CD4-positive, alpha-beta T cell (primary cell): ENCODE measurements at regions of chr1 and their contacts with region 1.

Region 1: DNA sequence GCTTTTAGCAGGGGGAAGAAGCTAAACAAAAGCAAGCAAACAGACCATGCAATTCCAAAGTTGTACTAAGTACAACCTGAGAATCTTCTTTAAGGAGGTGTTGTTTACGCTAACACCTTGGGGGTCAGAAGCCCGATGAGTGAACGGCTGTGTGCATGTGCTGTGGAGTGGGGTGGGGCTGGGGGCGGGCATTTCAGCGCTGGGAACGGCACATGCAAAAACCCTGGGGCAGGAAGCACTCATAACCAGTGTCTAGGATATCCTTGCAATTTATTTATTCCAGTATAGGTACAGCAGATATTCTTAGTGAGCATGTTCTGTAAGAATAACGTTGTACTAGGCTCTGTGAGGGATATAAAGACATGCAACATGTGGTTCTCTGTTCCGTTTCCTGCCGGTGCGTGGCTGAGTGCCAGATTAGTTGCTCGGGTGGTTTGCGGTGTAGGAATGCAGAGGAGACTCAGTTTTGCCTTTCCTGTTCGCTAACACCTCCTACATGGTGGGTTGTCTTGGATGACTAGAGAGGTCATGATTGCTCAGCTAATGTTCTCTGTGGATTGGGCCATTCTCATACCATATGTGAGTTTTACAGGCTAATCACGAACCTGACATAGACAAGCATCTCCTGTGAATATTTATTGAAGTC is 3.7 kb downstream of the FASLG start:
- DNase-seq: peak; percentile 61 to 91 (median 80)
- ATAC-seq: peak; percentile 84
- H3K4me3 ChIP-seq: peak overlapping the region; percentile 60
- H3K4me3 Mint-ChIP-seq: peak overlapping the region; percentile 43
- H3K27ac ChIP-seq: peak overlapping the region in 1 of 2 donors; percentile 26
- H3K27ac Mint-ChIP-seq: peak overlapping the region; percentile 36
- H3K4me1 ChIP-seq: peaks cover 49% of the 10 kb centered on the region
- H3K4me1 Mint-ChIP-seq: peaks cover 64% of the 10 kb centered on the region
- H3K27me3 ChIP-seq: no peaks in the 10 kb centered on the region
- H3K27me3 Mint-ChIP-seq: no peaks in the 10 kb centered on the region
- CTCF ChIP-seq: no peak

Region 2: DNA sequence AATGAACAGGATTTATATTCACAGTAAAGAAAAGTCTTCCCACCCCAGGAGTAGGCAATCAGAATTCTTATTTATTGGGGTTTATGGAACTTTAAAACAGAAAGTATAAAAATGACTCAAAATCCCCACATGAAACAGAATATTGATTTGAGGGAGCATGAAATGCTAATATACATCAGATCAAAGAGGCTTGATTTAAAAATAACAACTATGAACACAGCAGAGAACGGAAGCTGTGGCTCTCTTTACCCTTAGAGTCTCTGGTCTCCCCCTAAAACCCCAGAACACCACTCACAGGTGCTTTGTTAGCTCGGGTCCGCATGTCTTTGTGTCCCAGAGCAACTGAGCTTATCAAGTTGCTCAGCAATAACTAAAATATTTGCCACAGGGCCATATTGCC is 34.9 kb before region 1 on chr1:
- CTCF ChIA-PET with region 1: no interaction called
- POLR2A ChIA-PET with region 1: no interaction called
- intact Hi-C with region 1: loop called in 1 of 2 experiments (anchors 5 kb)
- DNase-seq: peak in 4 of 14 experiments; percentile 24 to 31 (median 27)
- ATAC-seq: peak; percentile 46
- H3K4me3 ChIP-seq: no peak overlapping the region
- H3K4me3 Mint-ChIP-seq: no peak overlapping the region
- H3K27ac ChIP-seq: no peak overlapping the region
- H3K27ac Mint-ChIP-seq: no peak overlapping the region
- H3K4me1 ChIP-seq: peaks cover 12% of the 10 kb centered on the region
- H3K4me1 Mint-ChIP-seq: peaks cover 53% of the 10 kb centered on the region
- H3K27me3 ChIP-seq: no peaks in the 10 kb centered on the region
- H3K27me3 Mint-ChIP-seq: no peaks in the 10 kb centered on the region
- CTCF ChIP-seq: no peak

Region 3: DNA sequence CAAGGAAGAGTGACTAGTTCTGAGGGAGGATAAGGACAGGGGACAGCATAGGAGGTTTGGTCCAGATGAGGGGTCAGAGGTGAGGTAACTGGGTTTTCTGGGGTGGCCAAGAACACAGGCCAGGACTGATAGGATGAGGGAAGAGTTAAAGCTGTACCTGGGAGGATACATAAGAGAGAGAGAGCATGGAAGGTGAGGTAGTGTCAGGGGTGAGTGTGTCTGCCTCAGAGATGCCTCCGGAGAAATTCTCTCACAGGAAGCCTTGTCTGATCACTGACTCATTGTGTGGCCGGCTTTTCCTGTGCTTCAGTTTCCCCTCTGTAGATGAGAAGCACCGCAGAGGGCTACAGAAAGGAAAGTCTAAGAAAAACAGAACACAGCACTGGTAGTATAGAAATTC is 36.5 kb after region 1 on chr1:
- CTCF ChIA-PET with region 1: no interaction called
- POLR2A ChIA-PET with region 1: interaction called, 7 read pairs
- intact Hi-C with region 1: loop called (anchors 5 kb)
- DNase-seq: peak; percentile 45 to 90 (median 67)
- ATAC-seq: peak; percentile 84
- H3K4me3 ChIP-seq: no peak overlapping the region
- H3K4me3 Mint-ChIP-seq: peak overlapping the region; percentile 46
- H3K27ac ChIP-seq: peak overlapping the region; percentile 73 to 83
- H3K27ac Mint-ChIP-seq: no peak overlapping the region
- H3K4me1 ChIP-seq: peaks cover 70% of the 10 kb centered on the region
- H3K4me1 Mint-ChIP-seq: peaks cover 6% of the 10 kb centered on the region
- H3K27me3 ChIP-seq: no peaks in the 10 kb centered on the region
- H3K27me3 Mint-ChIP-seq: no peaks in the 10 kb centered on the region
- CTCF ChIP-seq: no peak

Region 4: GRCh38 chr1:172758259-172758658 is 95.7 kb after region 1 on chr1:
- CTCF ChIA-PET with region 1: no interaction called
- POLR2A ChIA-PET with region 1: no interaction called
- intact Hi-C with region 1: no loop called
- DNase-seq: peak in 1 of 14 experiments; percentile 28
- ATAC-seq: no peak
- H3K4me3 ChIP-seq: no peak overlapping the region
- H3K4me3 Mint-ChIP-seq: no peak overlapping the region
- H3K27ac ChIP-seq: no peak overlapping the region
- H3K27ac Mint-ChIP-seq: no peak overlapping the region
- H3K4me1 ChIP-seq: no peaks in the 10 kb centered on the region
- H3K4me1 Mint-ChIP-seq: peaks cover 20% of the 10 kb centered on the region
- H3K27me3 ChIP-seq: no peaks in the 10 kb centered on the region
- H3K27me3 Mint-ChIP-seq: no peaks in the 10 kb centered on the region
- CTCF ChIP-seq: no peak